Body of pancreas (tissue), 4 donors: ENCODE measurements at regions of chr1 and their contacts with region 1.

Region 1: DNA sequence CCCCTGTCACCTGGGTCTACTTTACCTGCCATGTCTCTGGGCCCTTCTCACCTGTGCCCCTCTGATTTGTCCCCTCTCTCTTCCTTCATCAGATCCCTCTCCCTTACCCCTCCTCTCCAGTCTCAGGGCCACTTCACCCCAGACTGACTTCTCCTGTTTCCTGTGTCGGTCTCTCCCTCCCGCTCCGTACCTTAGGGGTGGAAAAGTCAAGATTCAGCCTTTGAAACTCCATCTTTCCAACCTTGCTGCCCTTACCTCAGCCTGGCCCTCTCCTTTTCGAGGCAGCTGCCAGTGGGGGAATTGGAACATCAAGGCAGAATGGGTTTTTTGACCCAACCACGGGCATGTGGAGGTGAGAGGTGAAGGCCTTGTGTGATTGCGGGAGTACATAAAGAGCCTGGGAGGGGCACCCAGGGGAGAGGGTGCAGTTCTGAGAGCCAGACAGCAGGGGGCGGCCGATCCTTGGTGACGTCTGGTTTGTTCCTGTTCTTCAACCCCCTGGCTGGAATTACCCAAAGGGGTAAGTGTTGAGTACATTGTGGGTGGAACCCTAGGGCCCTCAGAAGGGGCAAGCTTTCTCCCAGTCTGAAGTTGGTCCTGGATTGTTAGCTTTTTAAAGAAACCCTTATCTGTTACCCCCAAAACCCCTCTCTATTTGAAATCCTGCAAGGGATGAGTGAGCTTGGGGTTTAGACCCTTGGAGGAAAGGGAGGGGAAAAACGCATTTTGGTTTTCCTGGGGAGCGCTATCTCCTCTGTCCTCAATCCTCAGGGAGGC is 12.3 kb upstream of the DMBX1 start:
- DNase-seq: peak; percentile 76 to 85 (median 78)
- ATAC-seq: peak; percentile 83
- H3K4me3 ChIP-seq: no peak overlapping the region
- H3K27ac ChIP-seq: no peak overlapping the region
- H3K4me1 ChIP-seq: no peaks in the 10 kb centered on the region
- H3K27me3 ChIP-seq: no peaks in the 10 kb centered on the region
- CTCF ChIP-seq: peak; percentile 84 to 92 (median 90)
- POLR2A ChIP-seq: no peak

Region 2: DNA sequence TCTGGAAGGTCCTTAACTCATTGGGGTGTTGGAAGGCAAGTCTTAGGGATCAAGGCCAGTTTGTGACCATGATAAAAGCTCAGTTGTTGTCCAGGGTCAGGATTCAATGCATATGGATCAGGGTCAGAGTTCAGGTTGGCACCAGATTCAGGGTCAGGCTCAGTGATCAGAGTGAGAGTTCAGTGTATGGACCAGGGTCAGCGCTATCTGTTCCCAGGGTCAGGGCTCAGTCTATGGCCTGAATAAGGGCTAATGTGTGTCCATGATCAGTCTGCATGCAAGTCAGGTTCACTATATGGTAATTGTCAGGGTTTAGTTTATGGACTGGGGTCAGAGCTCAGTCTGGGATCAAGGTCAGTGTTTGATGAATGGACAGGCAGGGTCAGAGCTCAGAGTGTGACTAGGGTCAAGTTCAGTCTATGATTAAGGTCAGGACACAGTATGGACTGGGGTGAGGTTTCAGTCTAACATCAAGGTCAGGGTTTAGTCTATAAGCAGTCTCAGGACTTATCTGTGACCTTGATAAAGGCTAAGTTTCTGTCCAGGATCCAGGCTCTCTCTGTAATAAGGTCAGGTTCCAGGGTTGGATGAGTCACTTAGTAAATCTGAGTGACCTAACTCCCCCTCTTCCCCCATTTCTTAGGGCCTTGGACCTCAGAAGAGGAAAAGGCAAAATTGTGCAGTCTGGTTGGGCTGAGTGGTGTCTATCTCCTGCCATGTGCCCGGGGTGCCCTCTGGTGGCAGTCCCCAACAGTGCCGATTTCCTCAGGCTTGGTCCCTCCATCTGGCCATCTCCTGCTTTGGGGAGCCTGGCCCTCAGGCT is 50.3 kb after region 1 on chr1:
- intact Hi-C with region 1: loop called (anchors 5 kb)
- DNase-seq: peak; percentile 86 to 90 (median 86)
- ATAC-seq: peak; percentile 83
- H3K4me3 ChIP-seq: no peak overlapping the region
- H3K27ac ChIP-seq: no peak overlapping the region
- H3K4me1 ChIP-seq: peaks cover 10% of the 10 kb centered on the region
- H3K27me3 ChIP-seq: no peaks in the 10 kb centered on the region
- CTCF ChIP-seq: peak; percentile 88 to 95 (median 93)
- POLR2A ChIP-seq: no peak

Region 3: DNA sequence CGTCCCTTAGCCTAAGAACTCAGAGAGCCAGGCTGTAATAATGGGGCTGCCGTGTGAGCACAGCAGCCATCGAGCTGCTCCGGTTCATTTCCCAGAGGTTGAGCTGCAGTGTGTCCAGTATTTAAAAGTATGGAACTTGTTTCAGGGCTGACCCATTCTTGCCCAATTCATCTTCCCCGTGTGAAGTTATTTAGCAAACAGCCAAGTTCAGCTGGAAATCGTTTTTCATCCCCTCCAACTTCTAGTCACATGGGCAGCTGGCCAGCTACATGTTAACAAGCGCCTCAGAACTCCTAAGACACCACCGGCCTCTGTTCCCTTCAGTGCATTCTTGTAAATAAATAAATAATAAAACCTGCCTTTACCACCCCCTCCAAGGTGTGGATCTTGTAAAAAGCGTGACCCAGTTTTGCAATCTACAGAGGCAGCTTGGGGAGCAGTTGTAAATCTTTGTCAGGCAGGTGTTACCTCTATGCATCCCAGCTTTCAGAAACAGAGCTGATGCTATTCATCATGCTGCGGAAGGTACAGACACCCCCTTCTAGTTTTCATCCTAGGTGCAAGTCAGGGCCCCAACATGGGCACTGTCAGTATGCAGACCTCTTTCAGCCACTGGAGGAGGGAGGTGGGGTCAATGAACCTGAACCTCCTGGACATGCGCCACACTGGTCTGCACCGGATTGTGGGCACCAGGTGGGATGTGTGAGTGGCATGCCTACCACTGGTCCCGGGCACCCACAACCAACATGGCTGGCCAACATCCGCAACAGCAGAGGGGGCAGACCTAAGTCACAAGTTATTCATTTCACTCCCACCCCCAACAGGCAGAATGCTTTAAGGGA is 92.8 kb after region 1 on chr1:
- intact Hi-C with region 1: no loop called
- DNase-seq: no peak
- ATAC-seq: no peak
- H3K4me3 ChIP-seq: no peak overlapping the region
- H3K27ac ChIP-seq: no peak overlapping the region
- H3K4me1 ChIP-seq: peaks cover 17% of the 10 kb centered on the region
- H3K27me3 ChIP-seq: no peaks in the 10 kb centered on the region
- CTCF ChIP-seq: no peak
- POLR2A ChIP-seq: no peak

Region 4: DNA sequence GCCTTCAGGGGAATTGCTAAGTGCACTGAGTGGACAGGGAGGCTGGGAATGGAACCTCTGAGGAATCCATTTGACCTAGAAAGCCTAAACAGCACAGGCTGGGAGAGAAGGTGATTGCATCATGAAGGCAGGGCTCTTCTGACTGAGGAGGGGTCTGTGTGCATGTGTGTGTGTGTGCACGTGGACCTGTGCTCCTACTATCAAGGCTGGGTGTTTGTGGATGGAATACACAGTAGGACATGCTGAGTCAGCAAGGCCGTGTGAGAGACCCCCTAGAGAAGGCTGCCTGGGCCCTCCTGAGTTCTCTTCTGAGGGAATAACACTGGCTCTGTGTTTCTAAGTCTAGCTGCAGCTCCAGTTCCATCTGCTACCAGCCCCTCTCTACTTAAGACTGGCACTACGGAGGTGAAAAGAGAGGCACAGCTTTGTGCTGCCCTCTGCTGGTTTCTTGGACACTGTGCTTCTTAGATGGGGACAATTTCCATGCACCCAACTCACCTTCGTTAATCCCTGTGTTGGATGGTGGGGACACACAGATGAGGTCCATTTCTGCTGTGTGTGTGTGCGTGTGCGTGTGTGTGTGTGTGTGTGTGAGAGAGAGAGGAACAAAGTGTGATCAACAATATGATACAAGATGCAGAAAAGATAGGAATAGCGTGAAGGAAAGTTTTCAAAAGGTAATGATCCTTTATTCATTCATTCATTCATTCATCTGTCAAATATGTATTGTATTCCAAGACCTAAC is 247.8 kb after region 1 on chr1:
- intact Hi-C with region 1: loop called (anchors 5 kb)
- DNase-seq: peak; percentile 78 to 83 (median 82)
- ATAC-seq: peak; percentile 95
- H3K4me3 ChIP-seq: no peak overlapping the region
- H3K27ac ChIP-seq: no peak overlapping the region
- H3K4me1 ChIP-seq: no peaks in the 10 kb centered on the region
- H3K27me3 ChIP-seq: peaks cover 0 to 3% of the 10 kb centered on the region in 2 donors
- CTCF ChIP-seq: peak; percentile 78 to 94 (median 91)
- POLR2A ChIP-seq: no peak